Upper lobe of right lung (tissue), 1 donor: ENCODE measurements at regions of chr17 and their contacts with region 1.

Region 1: GRCh38 chr17:18974407-18975132 is 22.6 kb downstream of the SLC5A10 start:
- DNase-seq: no peak
- ATAC-seq: no peak
- H3K4me3 ChIP-seq: no peak overlapping the region
- H3K27ac ChIP-seq: no peak overlapping the region
- H3K4me1 ChIP-seq: no peaks in the 10 kb centered on the region
- H3K27me3 ChIP-seq: no peaks in the 10 kb centered on the region
- CTCF ChIP-seq: no peak

Region 2: DNA sequence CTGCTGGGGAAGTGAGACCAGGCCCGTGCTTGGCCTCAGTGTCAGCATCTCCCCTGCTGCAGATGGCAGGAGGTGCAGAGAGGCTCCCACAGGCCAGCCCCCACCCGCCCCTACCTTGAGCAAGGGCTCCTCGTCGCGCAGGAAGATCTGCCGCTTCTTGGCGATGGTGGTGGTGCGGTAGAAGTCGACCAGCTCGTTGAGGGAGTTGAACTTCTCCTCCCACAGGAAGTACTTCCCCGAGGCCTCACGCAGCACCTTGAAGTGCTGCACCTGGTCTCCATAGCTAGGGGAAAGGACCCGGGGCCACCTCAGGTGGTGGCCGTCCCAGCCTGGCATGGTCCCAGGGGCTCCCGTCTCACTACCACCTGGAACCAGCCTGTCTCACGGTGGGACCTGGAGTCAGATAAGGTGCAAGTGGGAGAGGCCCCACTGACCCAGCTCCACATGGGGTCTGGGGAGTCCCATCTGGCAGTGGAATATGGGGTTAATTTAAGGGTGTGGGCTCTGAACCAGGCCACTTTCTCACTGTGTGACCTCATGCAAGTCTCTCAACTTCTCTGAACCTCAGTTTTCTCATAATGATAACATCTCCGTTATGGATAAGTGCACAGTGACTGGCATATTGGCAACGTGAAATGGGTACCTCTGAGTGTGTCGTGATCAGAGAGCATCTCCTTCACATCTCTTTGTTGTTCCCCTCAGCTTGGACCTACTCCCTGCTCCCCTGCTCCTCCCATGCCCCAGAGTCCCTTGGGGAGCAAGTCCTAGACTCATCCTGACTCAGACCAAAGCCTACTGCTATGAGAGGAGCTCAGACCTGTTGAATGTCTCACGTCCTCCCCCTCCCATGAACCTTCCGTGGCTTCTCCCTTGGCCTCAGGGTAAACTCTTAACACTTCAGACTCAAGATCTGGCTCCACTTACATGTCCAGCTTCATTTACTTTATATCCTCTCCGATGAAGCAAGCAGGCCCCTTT is 49.8 kb after region 1 on chr17:
- intact Hi-C with region 1: loop called (anchors 10 kb)
- DNase-seq: peak; percentile 44
- ATAC-seq: no peak
- H3K4me3 ChIP-seq: no peak overlapping the region
- H3K27ac ChIP-seq: no peak overlapping the region
- H3K4me1 ChIP-seq: no peaks in the 10 kb centered on the region
- H3K27me3 ChIP-seq: no peaks in the 10 kb centered on the region
- CTCF ChIP-seq: no peak